KBM-7 (cell line): ENCODE measurements at regions of chr12 and their contacts with region 1.

Region 1: DNA sequence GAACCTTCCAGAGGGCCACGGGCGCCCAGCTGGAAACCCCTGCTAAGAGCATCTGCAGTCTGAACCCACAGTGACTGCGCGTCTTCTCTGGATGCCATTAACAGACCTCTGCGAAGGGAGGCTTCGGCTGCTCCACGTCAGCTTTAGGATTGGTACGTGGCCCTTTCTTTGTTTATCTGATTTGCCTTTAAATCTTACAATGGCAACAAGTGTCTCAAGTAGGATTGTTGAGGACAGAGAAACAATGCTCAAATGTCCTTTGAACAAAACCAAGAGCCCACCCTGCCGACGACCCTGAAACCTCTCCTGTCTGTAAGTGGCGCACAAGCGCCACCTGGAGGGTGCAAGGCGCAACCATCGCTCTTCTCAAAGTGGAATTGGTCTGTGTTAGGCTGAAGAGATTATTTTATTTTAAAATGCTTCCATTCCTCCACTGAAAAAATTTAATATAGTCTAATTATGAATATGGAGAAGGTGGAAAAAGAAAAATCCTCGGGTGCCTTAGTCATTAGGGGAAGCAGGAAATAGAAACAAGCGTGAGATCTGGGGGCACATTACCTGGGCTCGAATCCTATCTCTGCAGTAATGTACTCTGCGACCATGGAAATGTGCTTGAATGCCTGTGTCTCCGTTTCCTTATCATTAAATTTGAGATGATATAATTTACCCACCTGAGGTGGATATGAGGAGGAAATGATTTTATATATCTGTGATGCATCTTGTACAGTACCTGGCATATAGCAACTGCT is 82.6 kb upstream of the PTPRB start:
- DNase-seq: peak; percentile 51

Region 2: GRCh38 chr12:69879041-69879960 is 840.5 kb before region 1 on chr12:
- in situ Hi-C with region 1: loop called (anchors 25 kb)
- DNase-seq: peak; percentile 64

Region 3: DNA sequence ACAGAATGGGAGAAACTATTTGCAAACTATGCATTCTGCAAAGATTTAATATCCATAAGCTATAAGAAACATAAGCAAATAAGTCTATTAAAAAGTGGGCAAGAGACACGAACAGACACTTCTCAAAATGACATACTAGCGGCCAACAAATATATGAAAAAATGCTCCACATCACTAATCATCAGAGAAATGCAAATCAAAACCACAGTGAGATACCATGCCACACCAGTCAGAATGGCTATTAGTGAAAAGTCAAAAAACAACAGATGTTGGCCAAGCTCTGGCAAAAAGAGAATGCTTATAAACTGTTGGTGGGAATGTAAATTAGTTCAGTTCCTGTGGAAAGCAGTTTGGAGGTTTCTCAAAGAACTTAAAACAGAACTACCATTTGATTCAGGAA is 232.4 kb before region 1 on chr12:
- in situ Hi-C with region 1: no loop called
- DNase-seq: no peak

Region 4: GRCh38 chr12:70557583-70558191 is 162.2 kb before region 1 on chr12:
- in situ Hi-C with region 1: no loop called
- DNase-seq: no peak

Region 5: GRCh38 chr12:70628701-70629480 is 91.0 kb before region 1 on chr12:
- in situ Hi-C with region 1: no loop called
- DNase-seq: no peak